Right cardiac atrium (tissue), 5 donors: ENCODE measurements at regions of chr15 and their contacts with region 1.

Region 1: GRCh38 chr15:67839929-67840748 is at the start of gene RNU6-1:
- DNase-seq: peak; percentile 95 to 98 (median 98)
- ATAC-seq: peak; percentile 92 to 94
- H3K4me3 ChIP-seq: peak within 1 kb of the TSS; percentile 87
- H3K27ac ChIP-seq: peak within 1 kb of the TSS; percentile 92
- H3K4me1 ChIP-seq: peaks cover 5% of the 10 kb centered on the region
- H3K27me3 ChIP-seq: no peaks in the 10 kb centered on the region
- total RNA-seq, gene RNU6-1: not detected

Region 2: GRCh38 chr15:66931768-66932633 is 908.1 kb before region 1 on chr15:
- intact Hi-C with region 1: loop called in 1 of 4 experiments (anchors 10 kb)
- DNase-seq: no peak
- ATAC-seq: peak in 1 of 2 donors; percentile 25
- H3K4me3 ChIP-seq: no peak overlapping the region
- H3K27ac ChIP-seq: no peak overlapping the region
- H3K4me1 ChIP-seq: peaks cover 14% of the 10 kb centered on the region
- H3K27me3 ChIP-seq: no peaks in the 10 kb centered on the region

Region 3: DNA sequence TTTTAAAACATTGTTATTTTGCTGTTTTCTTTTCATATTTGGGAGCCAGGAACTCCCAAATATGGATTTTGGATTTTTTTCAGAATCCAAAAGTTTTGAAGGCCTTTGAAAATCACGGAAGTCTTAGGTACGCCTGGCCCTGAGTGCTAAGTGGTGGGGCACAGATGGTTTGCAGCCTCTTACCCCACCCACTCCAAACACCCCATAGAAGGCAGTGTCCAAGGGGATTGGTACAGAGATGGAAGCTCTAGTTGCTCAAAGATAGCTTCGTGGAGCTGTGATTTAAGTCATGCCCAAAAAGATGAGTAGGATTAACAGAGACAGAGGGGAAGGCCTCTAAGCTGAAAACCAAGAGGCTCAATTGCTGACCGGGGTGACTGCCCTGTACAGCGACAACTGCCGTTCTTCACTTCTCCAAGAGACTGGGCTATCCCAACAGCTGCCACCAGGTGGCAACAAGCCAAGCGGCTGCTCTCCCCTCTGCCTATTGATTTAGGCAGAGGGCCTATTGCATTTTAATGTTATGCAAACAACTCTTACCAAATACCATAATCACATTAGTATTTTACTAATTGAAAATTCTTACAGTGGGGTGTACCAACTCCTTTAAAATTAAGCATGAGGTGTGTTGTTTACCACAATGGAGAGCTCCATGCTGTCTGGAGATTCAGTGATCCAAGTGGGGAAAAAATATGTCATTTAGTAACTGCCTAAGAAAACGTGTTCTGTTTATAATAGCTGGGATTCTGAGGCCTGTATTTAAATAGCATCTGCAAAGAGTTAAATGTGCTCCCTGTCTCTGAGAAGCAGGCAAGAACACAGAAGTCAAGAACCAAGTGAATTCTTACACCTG is 383.2 kb before region 1 on chr15:
- intact Hi-C with region 1: loop called in 3 of 4 experiments (anchors 2 to 5 kb)
- DNase-seq: peak; percentile 85 to 93 (median 91)
- ATAC-seq: peak; percentile 89 to 94
- H3K4me3 ChIP-seq: no peak overlapping the region
- H3K27ac ChIP-seq: no peak overlapping the region
- H3K4me1 ChIP-seq: no peaks in the 10 kb centered on the region
- H3K27me3 ChIP-seq: no peaks in the 10 kb centered on the region

Region 4: DNA sequence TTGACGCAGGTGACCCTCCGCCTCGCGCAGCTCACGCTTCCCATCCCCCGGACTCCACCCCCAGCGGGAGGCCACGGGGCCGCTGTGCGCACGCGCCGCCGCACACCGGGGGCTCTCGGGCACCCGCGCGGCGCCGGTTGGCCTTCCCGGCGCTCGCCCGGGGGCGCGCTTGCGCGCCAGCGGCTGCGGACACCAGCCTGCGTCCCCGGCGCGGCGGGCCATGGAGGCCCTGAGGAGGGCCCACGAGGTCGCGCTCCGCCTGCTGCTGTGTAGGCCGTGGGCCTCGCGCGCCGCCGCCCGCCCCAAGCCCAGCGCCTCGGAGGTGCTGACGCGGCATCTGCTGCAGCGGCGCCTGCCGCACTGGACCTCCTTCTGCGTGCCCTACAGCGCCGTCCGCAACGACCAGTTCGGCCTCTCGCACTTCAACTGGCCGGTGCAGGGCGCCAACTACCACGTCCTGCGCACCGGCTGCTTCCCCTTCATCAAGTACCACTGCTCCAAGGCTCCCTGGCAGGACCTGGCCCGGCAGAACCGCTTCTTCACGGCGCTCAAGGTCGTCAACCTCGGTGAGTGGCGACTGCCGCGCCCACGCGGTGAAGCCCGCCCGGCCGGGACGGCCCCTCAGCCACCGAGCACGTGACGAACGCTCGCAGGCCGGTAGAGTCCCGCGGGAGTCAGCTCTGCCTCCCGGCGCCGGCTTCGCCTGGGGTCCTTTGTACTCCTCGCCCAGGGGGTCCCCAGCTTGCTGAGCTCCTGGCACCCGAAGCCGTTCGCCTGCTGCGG is 318.9 kb before region 1 on chr15 and contains the start of gene C15orf61:
- intact Hi-C with region 1: loop called in 1 of 4 experiments (anchors 5 kb)
- DNase-seq: peak; percentile 87 to 95 (median 95)
- ATAC-seq: peak; percentile 94 to 95
- H3K4me3 ChIP-seq: peak within 1 kb of the TSS; percentile 72
- H3K27ac ChIP-seq: peak within 1 kb of the TSS; percentile 94
- H3K4me1 ChIP-seq: no peaks in the 10 kb centered on the region
- H3K27me3 ChIP-seq: no peaks in the 10 kb centered on the region
- total RNA-seq, gene C15orf61: 10.1 to 11.1 (median 10.3) TPM

Region 5: DNA sequence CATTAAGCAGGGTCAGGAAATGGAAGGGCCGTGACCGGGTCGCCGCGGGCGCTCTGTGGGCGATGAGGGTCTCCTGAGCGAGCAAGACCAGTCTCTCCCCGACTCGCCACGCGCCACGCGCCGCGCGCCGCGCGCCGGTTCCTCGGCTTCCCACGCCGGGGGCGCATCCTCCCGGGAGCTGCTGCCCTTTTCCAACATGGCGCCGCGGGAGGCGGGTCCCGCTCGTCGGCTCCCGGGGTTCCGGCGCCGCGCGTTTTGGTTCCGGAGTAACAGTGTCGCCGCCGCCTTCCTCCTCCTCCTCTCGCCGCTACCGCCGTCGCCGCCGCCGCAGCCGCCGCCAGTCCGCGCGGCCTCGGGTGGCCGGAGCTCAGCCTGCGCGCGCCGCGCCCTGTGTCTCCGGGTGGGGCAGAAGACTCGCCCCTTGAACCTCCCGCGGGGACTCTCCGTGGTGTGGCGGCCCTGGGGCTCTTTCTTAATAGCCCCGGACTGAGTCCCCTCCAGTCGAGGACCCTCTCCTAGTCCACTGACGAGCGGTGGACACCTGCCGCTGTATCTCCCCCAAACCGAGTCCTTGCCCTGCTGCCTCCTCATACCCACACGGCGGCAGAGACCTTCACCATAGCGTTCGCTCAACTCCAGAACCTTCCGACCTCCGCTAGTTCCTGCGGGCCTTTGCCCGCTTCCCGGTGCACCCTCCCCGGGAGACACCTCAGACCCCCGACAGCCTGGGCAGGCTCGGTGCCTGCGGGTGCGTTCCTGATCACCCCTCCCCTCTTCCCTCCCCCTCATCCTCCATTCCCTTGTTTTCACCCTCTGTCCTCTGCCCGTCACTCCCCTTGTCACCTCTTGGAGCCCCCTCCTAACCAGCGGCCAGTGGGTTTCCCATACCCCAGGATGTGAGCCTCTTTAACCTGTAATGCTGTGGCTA is 297.5 kb before region 1 on chr15 and contains the start of gene MAP2K5:
- intact Hi-C with region 1: loop called in 1 of 4 experiments (anchors 10 kb)
- DNase-seq: peak; percentile 89 to 97 (median 95)
- ATAC-seq: peak; percentile 95 to 97
- H3K4me3 ChIP-seq: peak within 1 kb of the TSS; percentile 95
- H3K27ac ChIP-seq: peak within 1 kb of the TSS; percentile 89
- H3K4me1 ChIP-seq: peaks cover 5% of the 10 kb centered on the region
- H3K27me3 ChIP-seq: no peaks in the 10 kb centered on the region
- total RNA-seq, gene MAP2K5: 12.5 to 16.6 (median 15.4) TPM

Region 6: DNA sequence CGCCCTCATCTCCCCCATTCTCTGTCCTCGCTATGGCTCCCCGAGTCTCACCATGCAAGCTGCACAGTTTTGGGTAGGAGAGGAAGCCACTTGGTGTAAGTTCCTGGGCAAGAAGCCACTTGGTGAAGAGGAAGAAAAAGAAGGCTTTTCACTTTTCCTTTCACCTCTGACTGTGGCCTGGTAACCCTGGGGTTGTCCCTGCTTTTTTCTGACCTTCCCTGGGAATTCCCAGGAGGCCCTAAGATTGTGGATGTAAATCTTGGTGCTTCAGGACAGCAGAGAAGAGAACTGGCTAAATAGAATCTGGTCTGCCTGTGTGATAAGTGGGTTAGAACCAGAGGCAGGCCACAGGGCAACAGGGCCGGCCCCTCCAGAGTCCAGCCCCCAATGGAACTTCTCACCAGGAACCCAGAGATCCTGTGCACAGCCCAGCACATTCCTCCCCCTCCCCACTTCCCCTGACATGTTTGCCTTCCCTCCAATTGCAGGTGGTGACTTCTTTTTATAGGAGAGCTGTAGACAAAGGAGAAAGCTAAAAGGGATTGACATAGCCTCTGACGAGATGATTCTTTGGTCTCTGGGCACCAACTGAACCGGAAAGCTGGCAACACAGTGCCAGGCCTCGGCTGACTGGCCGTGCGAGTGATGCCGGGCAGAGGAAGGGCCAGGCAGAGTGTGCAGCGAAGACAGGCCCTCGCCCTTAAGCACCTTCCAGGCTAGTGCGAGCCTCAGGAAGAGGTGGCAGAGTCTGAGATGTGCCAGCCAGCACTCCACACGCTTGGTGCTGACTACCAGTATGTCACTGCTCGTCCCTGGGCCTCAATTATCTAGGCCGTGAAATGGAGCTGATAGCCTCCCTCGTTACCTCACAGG is 34.2 kb before region 1 on chr15:
- intact Hi-C with region 1: no loop called
- DNase-seq: no peak
- ATAC-seq: no peak
- H3K4me3 ChIP-seq: no peak overlapping the region
- H3K27ac ChIP-seq: no peak overlapping the region
- H3K4me1 ChIP-seq: peaks cover 3% of the 10 kb centered on the region
- H3K27me3 ChIP-seq: no peaks in the 10 kb centered on the region